Activated T-helper 1 cell treated with anti-CD3 and anti-CD28 coated beads, Interleukin-12 subunit alpha, Interleukin-12 subunit beta, Interleukin-2, Interleukin-4 antibody, amounts not matched to agents 30 ng/mL and 10 ng/mL and 1 ng/mL, durations not matched to agents 14 hours and 24 hours and 36 hours (primary cell): ENCODE measurements at regions of chr17 and their contacts with region 1.

Region 1: DNA sequence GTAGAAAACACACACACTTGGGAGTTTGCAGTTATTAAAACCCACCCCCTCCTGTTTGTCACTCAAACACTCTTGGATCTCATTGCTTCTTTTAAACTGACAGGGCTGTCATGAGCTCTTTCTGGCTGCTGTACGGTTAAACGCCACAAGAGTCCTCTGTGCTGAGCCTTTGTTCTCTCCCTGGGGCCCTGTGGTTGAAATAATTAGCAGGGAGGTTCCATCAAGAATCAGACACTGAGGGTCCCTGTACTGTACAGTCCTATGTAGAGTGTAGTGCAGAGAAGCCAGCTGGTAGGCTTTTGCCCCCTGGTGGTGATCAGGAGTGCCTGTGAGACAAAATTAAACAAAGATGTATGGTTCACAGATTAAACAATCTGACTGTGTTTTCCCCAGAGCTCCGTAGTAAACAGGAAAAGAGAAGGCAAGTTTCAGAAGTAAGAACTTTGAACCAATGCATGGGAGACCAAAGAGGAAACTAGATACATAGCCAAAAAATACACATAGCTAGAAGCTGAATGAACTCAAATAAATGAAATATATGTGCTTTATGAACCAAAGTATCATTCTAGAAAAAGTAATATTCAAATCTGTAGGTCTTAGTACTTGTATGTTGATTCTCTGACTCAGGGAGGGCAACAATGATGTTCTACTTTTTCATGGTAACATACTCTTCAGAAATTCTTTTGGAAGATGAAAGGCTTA is 1.4 kb upstream of the SSH2 start:
- DNase-seq: peak; percentile 62
- H3K4me3 Mint-ChIP-seq: no peak overlapping the region
- H3K27ac Mint-ChIP-seq: no peak overlapping the region
- H3K4me1 Mint-ChIP-seq: peaks cover 28% of the 10 kb centered on the region
- H3K27me3 Mint-ChIP-seq: peaks cover 1% of the 10 kb centered on the region

Region 2: GRCh38 chr17:29579866-29580771 is 351.3 kb before region 1 on chr17:
- intact Hi-C with region 1: loop called (anchors 1 kb)
- DNase-seq: peak; percentile 79
- H3K4me3 Mint-ChIP-seq: no peak overlapping the region
- H3K27ac Mint-ChIP-seq: peak overlapping the region; percentile 90
- H3K4me1 Mint-ChIP-seq: peaks cover 23% of the 10 kb centered on the region
- H3K27me3 Mint-ChIP-seq: no peaks in the 10 kb centered on the region

Region 3: DNA sequence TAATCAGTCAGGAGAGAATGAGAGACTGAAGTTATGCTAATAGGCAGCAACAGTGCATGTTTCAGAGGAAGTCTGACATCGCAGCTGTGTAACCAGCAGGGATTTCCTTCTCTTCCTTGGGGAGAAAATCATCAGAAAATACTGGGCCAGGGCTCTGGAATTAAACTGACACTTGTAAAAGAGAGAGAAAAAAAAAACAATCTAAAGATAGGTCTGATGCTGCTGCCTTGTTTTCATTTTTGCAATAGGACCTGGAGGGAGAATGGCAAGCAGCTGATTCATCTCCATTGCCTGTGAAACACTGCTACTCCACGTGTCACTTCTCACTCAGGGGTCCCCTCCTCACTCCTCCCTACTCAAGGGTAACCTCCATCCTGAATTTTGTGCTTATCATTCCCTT is 291.0 kb before region 1 on chr17:
- intact Hi-C with region 1: loop called (anchors 1 kb)
- DNase-seq: no peak
- H3K4me3 Mint-ChIP-seq: no peak overlapping the region
- H3K27ac Mint-ChIP-seq: peak overlapping the region; percentile 36
- H3K4me1 Mint-ChIP-seq: peaks cover 27% of the 10 kb centered on the region
- H3K27me3 Mint-ChIP-seq: no peaks in the 10 kb centered on the region

Region 4: GRCh38 chr17:29807520-29808351 is 123.6 kb before region 1 on chr17:
- intact Hi-C with region 1: loop called (anchors 1 kb)
- DNase-seq: peak; percentile 52
- H3K4me3 Mint-ChIP-seq: no peak overlapping the region
- H3K27ac Mint-ChIP-seq: no peak overlapping the region
- H3K4me1 Mint-ChIP-seq: peaks cover 23% of the 10 kb centered on the region
- H3K27me3 Mint-ChIP-seq: no peaks in the 10 kb centered on the region

Region 5: DNA sequence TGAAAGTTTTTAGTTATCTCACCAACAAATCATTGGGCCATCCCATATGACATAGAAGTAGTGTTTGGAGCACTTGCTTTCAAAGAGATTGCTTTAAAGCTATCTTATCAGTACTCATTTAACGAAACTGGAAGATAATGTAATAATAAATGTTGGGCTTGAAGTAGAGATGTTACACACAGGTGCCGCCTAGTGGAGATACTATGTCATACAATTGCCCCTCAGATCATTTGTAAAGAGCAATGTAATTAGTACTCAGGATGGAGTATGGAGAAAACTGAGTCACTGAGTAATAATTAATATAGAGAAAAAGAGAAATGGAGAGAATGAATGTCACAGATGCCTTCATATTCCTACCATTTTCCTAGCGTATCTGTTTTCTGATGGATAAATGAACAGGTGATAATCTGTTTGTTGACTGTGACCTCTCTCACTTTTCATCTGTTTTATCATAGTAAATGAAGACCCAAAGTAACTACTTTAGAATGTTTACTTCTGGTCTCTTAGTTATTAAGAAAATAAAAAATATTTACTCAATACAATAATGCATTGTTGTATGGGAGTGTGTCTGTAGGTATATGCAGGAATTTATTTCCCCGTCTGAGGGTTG is 90.4 kb after region 1 on chr17:
- intact Hi-C with region 1: loop called (anchors 5 kb)
- DNase-seq: peak; percentile 16
- H3K4me3 Mint-ChIP-seq: no peak overlapping the region
- H3K27ac Mint-ChIP-seq: no peak overlapping the region
- H3K4me1 Mint-ChIP-seq: no peaks in the 10 kb centered on the region
- H3K27me3 Mint-ChIP-seq: peaks cover 11% of the 10 kb centered on the region